ENCODE measurements at regions of chr9 and their contacts with region 1.

Region 1: DNA sequence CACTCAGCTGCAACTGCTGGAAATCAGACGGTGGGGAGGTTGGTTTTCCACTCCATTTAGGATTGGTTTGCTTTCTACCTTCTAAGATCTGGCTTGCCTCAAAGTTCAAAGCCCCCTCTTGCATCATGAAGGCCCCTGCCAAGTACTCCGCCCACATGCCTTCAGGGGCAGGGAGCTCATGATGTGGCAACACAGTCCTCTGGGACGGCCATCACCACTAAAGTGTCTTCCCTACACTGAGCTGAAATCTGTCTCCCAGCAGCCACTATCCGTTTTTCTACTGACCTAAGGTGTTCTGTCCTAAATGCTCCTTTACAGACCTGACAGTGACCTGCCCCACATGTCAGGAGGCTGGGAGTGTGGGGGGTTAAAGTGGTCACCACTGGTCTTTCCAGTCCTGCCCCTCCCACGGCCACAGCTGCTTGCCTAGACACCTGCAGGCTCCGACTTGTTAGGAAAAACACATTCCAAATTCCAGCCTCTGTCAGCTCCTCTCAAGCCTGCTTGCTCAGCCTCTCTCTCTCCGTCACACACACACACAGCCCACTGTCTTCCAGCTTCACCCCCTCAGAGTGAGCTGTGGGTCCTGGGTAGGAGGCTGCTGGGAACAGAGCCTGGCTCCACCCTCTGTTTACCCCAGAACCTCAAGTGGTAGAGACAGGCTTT is 44.9 kb downstream of the SHB start:
- H3K4me3 ChIP-seq: no peak overlapping the region
- H3K27ac ChIP-seq: no peak overlapping the region
- H3K4me1 ChIP-seq: peaks cover 16% of the 10 kb centered on the region
- CTCF ChIP-seq: no peak

Region 2: DNA sequence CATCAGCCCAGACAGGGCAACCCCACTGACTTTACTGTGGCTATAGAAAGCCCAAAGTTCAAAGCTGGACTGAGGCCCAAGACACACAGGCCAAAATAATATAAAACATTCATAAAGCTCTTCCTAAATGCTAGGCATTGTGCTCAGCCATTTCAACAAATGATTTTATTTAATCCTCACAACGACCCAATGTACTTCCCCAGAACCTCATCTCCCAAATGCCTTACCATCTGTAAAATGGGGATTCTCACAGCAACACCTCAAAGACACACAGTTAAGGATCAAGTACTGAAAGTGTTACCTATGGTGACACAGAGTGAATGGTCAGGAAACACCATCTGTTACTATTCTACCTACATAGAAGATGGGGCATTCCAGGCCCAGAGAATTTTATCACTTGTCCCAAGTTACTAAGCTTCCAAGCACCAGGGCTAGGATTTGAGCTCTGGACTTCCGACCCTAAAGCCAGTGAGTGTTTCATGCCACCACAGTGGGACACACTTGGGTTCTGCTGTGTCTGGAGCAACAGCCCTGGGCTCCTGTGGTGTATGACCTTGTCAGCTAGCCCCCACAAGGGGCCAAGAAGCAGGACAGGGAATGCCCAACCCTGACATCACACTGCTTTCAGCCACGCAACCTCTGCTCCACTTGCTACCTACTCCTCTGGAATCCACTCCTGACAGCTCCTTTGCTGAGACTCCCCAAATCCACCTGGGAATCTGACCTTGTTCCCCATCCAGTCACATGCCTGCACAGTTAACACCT is 29.7 kb after region 1 on chr9:
- CTCF ChIA-PET with region 1: no interaction called
- POLR2A ChIA-PET with region 1: no interaction called
- H3K4me3 ChIP-seq: no peak overlapping the region
- H3K27ac ChIP-seq: no peak overlapping the region
- H3K4me1 ChIP-seq: no peaks in the 10 kb centered on the region; the same call in 1 of the 2 replicates
- CTCF ChIP-seq: no peak

Region 3: DNA sequence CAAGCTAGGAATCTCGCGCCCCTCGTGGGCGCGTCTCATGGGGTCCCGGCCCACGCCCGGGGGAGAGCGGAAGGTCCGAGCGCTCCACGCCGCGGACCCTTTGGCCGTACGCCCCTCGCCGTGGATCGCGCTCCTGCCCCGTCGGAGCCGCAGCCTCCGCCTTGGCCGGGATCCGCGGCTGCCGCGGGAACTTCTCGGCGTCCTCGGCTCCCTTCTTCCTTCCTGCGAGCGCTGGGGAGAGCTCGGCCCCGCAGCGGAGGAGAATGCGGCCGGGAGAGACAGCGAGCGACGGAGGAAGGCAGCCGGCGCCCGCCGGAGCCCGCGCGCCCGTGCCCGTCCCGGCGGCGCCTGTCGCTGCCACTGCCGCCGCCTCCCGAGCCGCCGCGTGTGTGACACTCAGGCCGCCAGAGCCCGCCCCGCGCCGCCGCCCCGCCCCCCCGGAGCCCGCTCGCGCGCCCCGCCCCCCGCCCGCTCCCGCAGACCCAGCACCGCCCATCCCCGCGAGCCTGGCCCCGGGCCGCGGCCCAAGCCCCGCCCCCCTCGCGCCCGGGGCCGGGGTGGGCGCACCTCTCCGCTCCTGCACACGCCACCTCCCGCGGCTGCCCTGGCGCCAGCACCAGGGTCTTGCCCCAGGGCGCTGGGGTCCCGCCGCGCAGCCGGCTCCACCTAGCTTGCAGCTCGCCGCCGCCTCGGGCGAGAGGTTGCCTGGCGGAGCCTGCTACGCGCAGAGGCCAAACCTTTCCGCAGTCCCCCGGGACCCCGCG is 44.9 kb after region 1 on chr9 and contains the start of gene SHB:
- CTCF ChIA-PET with region 1: interaction called, 11 read pairs
- POLR2A ChIA-PET with region 1: interaction called, 7 read pairs
- H3K4me3 ChIP-seq: peak within 1 kb of the TSS; percentile 72
- H3K27ac ChIP-seq: peak within 1 kb of the TSS; percentile 87
- H3K4me1 ChIP-seq: 0 out of 2 replicates have a peak, but pooled peaks cover 2% of the 10 kb centered on the region
- CTCF ChIP-seq: peak; percentile 72

Measured in HEK293 (cell line).